K562 (cell line): ENCODE measurements at regions of chr17 and their contacts with region 1.

Region 1: GRCh38 chr17:28726226-28727130 is at the start of gene TLCD1:
- DNase-seq: peak; percentile 75 to 99 (median 85)
- ATAC-seq: peak; percentile 58
- H3K4me3 ChIP-seq: peak within 1 kb of the TSS; percentile 83
- H3K27ac ChIP-seq: peak within 1 kb of the TSS; percentile 97
- H3K4me1 ChIP-seq: peaks cover 49 to 66% of the 10 kb centered on the region in 2 experiments
- H3K27me3 ChIP-seq: no peaks in the 10 kb centered on the region
- CTCF ChIP-seq: peak; percentile 99 to 100 (median 99)
- EP300 ChIP-seq: peak; percentile 38; the same call in 1 of the 2 replicates
- POLR2A ChIP-seq: no peak
- RAD21 ChIP-seq: peak; percentile 100
- polyA plus RNA-seq, gene TLCD1: 6.8 to 10.2 TPM

Region 2: GRCh38 chr17:28295677-28296578 is 430.6 kb before region 1 on chr17:
- CTCF ChIA-PET with region 1: no interaction called
- POLR2A ChIA-PET with region 1: no interaction called
- in situ Hi-C with region 1: no loop called
- intact Hi-C with region 1: no loop called
- DNase-seq: no peak
- ATAC-seq: no peak
- H3K4me3 ChIP-seq: no peak overlapping the region
- H3K27ac ChIP-seq: no peak overlapping the region
- H3K4me1 ChIP-seq: no peaks in the 10 kb centered on the region
- H3K27me3 ChIP-seq: no peaks in the 10 kb centered on the region
- CTCF ChIP-seq: no peak
- EP300 ChIP-seq: no peak
- POLR2A ChIP-seq: no peak
- RAD21 ChIP-seq: no peak

Region 3: GRCh38 chr17:28686296-28686695 is 40.2 kb before region 1 on chr17:
- CTCF ChIA-PET with region 1: no interaction called
- POLR2A ChIA-PET with region 1: no interaction called
- in situ Hi-C with region 1: no loop called
- intact Hi-C with region 1: no loop called
- DNase-seq: no peak
- ATAC-seq: no peak
- H3K4me3 ChIP-seq: no peak overlapping the region
- H3K27ac ChIP-seq: no peak overlapping the region
- H3K4me1 ChIP-seq: no peaks in the 10 kb centered on the region
- H3K27me3 ChIP-seq: no peaks in the 10 kb centered on the region
- CTCF ChIP-seq: no peak
- EP300 ChIP-seq: no peak
- POLR2A ChIP-seq: no peak
- RAD21 ChIP-seq: no peak

Region 4: DNA sequence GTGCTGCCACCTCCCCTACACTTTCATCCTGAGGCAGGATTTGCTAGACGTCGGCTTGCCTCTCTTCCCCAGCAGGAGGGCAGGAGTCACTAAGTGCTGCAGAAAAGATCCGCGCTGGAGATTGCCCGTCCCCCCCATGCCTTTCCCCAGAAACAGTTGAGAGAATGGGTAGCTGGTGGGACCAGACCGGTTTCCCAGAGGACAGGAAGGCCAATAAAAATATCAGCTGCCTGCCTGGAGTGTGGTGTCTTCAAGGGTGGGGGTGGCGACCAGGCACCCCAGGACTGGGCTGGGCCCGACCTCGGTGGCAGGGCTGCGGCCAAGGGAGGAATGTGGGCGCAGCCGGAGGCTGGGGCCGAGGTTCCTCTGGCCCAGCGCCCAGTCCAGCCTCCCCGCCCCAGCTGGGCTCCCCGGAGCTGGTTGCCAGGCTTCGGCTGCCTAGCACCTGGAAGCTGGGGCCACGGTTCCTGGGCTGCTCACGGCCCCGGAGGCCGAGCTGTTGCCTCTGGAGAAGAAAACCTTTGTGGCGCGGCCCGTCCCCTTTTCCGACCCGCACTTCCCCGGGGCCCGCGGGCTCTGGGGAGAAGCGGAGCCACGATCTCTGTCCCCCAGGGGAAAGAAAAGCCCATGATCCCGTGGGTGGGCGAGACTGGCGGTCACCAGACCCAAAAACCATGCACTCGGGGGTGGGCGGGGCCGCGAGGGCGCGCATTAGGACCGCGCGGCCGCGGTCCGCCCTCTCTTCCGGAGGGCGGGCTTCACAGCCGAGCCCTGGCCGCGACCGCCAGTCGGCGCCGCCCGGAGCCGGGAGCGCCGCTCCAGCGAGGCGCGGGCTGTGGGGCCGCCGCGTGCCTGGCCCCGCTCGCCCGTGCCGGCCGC is 17.0 kb after region 1 on chr17 and contains the start of gene TRAF4:
- CTCF ChIA-PET with region 1: interaction called, 117 read pairs
- POLR2A ChIA-PET with region 1: interaction called, 367 read pairs
- in situ Hi-C with region 1: no loop called
- intact Hi-C with region 1: loop called (anchors 1 kb)
- DNase-seq: peak; percentile 90 to 95 (median 93)
- ATAC-seq: peak; percentile 87
- H3K4me3 ChIP-seq: peak within 1 kb of the TSS; percentile 87
- H3K27ac ChIP-seq: peak within 1 kb of the TSS; percentile 96
- H3K4me1 ChIP-seq: peaks cover 43 to 81% of the 10 kb centered on the region in 2 experiments
- H3K27me3 ChIP-seq: no peaks in the 10 kb centered on the region
- CTCF ChIP-seq: peak in 2 of 3 experiments; percentile 41 to 63; a peak in 4 of 6 replicates
- EP300 ChIP-seq: peak; percentile 17; the same call in 1 of the 2 replicates
- POLR2A ChIP-seq: peak; percentile 50; the same call in 1 of the 2 replicates
- RAD21 ChIP-seq: peak in 1 of 2 experiments; percentile 49; a peak in 3 of 4 replicates
- polyA plus RNA-seq, gene TRAF4: 2.4 to 5.0 TPM

Region 5: DNA sequence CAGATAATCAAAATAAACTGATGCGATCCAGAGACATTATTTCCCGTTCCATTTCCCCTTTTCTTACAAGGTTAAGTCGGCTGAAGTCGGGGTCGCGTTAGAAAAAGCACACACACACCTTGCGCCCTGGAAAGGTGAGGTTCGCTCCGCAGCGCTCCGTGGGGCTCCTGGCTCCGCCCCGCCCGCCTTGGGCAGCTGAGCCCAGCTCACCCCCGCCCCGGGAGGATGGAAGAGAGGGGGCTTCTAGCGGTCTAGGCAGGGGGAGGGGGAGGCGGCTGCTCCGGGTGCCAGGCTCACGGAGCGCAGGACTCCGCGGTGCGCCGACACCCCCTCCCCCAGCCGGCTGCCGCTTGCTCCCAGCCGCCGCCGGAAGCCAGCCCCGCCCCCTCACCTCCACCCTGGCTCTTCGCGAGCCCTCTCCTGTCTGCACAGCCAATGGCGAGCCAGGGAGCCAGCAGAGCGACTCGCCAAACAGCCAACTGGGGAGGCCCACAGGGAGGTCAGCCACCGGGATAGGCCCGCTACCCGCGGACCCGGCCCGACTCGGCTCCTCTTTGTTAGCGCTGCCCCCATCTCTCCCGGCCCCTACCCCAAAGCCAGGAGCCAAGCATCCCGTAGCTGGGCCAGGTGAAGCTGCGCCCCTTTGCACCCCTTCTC is 85.7 kb after region 1 on chr17:
- CTCF ChIA-PET with region 1: no interaction called
- POLR2A ChIA-PET with region 1: interaction called, 7 read pairs
- in situ Hi-C with region 1: no loop called
- intact Hi-C with region 1: loop called (anchors 5 kb)
- DNase-seq: peak; percentile 99 to 100 (median 99)
- ATAC-seq: peak; percentile 99
- H3K4me3 ChIP-seq: peak overlapping the region; percentile 63
- H3K27ac ChIP-seq: peak overlapping the region; percentile 91
- H3K4me1 ChIP-seq: peaks cover 42 to 51% of the 10 kb centered on the region in 2 experiments
- H3K27me3 ChIP-seq: no peaks in the 10 kb centered on the region
- CTCF ChIP-seq: no peak
- EP300 ChIP-seq: 0 out of 2 replicates have a peak, but pooled peaks have one; percentile 3
- POLR2A ChIP-seq: peak; percentile 71
- RAD21 ChIP-seq: no peak

Region 6: GRCh38 chr17:28908640-28909167 is 182.2 kb after region 1 on chr17:
- CTCF ChIA-PET with region 1: interaction called, 14 read pairs
- POLR2A ChIA-PET with region 1: interaction called, 36 read pairs
- in situ Hi-C with region 1: no loop called
- intact Hi-C with region 1: loop called (anchors 2 kb)
- DNase-seq: no peak
- ATAC-seq: no peak
- H3K4me3 ChIP-seq: no peak overlapping the region
- H3K27ac ChIP-seq: no peak overlapping the region; the same call in 2 of the 3 replicates
- H3K4me1 ChIP-seq: peaks cover 60 to 69% of the 10 kb centered on the region in 2 experiments
- H3K27me3 ChIP-seq: no peaks in the 10 kb centered on the region
- CTCF ChIP-seq: no peak
- EP300 ChIP-seq: no peak
- POLR2A ChIP-seq: no peak
- RAD21 ChIP-seq: no peak

Region 7: GRCh38 chr17:29061036-29061435 is 334.6 kb after region 1 on chr17:
- CTCF ChIA-PET with region 1: no interaction called
- POLR2A ChIA-PET with region 1: no interaction called
- in situ Hi-C with region 1: no loop called
- intact Hi-C with region 1: loop called (anchors 5 kb)
- DNase-seq: peak in 3 of 4 experiments; percentile 37 to 60 (median 59)
- ATAC-seq: peak; percentile 82
- H3K4me3 ChIP-seq: no peak overlapping the region
- H3K27ac ChIP-seq: no peak overlapping the region
- H3K4me1 ChIP-seq: peaks cover 2 to 6% of the 10 kb centered on the region in 2 experiments; a peak in 2 of 5 replicates
- H3K27me3 ChIP-seq: peaks cover 7 to 27% of the 10 kb centered on the region in 2 experiments; a peak in 4 of 5 replicates
- CTCF ChIP-seq: no peak
- EP300 ChIP-seq: peak; percentile 28; the same call in 1 of the 2 replicates
- POLR2A ChIP-seq: no peak
- RAD21 ChIP-seq: no peak